ENCODE measurements at regions of chr11 and their contacts with region 1.

Region 1: GRCh38 chr11:108647701-108648527 is 17.0 kb upstream of the DDX10 start:
- DNase-seq: peak; percentile 44
- CTCF ChIP-seq: peak; percentile 83

Region 2: GRCh38 chr11:108237058-108237481 is 410.8 kb before region 1 on chr11:
- in situ Hi-C with region 1: loop called (anchors 25 kb)
- DNase-seq: no peak
- CTCF ChIP-seq: no peak

Region 3: GRCh38 chr11:108414958-108415357 is 233.0 kb before region 1 on chr11:
- in situ Hi-C with region 1: loop called (anchors 10 kb)
- DNase-seq: no peak
- CTCF ChIP-seq: no peak

Measured in GM13976 (cell line).